ENCODE measurements at regions of chr1 and their contacts with region 1.

Region 1: GRCh38 chr1:156920233-156921052 is at the start of gene LRRC71:
- DNase-seq: peak in 6 of 10 donors; percentile 24 to 69 (median 42)
- H3K4me3 ChIP-seq: peak within 1 kb of the TSS in 25 of 59 donors; percentile 0 to 41 (median 22)
- H3K27ac ChIP-seq: no peak within 1 kb of the TSS
- H3K27me3 ChIP-seq: peaks cover 4 to 87% (median 63%) of the 10 kb centered on the region in 45 donors
- CTCF ChIP-seq: peak; percentile 16 to 85 (median 72)
- total RNA-seq, gene LRRC71: 0.23 to 0.84 (median 0.42) TPM in 11 of 120 experiments, not detected in the others

Region 2: GRCh38 chr1:157073944-157074767 is 153.7 kb after region 1 on chr1:
- intact Hi-C with region 1: loop called in 1 of 2 experiments (anchors 5 kb)
- DNase-seq: peak in 9 of 10 donors; percentile 26 to 75 (median 59)
- H3K4me3 ChIP-seq: peak overlapping the region in 27 of 59 donors; percentile 1 to 44 (median 24)
- H3K27ac ChIP-seq: no peak overlapping the region
- H3K27me3 ChIP-seq: peaks cover 0 to 15% (median 0%) of the 10 kb centered on the region in 45 donors
- CTCF ChIP-seq: peak in 54 of 56 donors; percentile 41 to 81 (median 62)

Measured in dorsolateral prefrontal cortex (tissue), 120 donors.